Heart left ventricle (tissue), 16 donors: ENCODE measurements at regions of chr11 and their contacts with region 1.

Region 1: GRCh38 chr11:19566583-19567379 is 145.9 kb upstream of the NAV2 start:
- DNase-seq: no peak
- ATAC-seq: no peak
- H3K4me3 ChIP-seq: no peak overlapping the region
- H3K27ac ChIP-seq: peak overlapping the region in 1 of 12 donors; percentile 60
- H3K4me1 ChIP-seq: peaks cover 0 to 16% (median 5%) of the 10 kb centered on the region in 12 donors
- H3K27me3 ChIP-seq: peaks cover 0 to 4% (median 0%) of the 10 kb centered on the region in 9 donors
- CTCF ChIP-seq: no peak
- POLR2A ChIP-seq: no peak

Region 2: DNA sequence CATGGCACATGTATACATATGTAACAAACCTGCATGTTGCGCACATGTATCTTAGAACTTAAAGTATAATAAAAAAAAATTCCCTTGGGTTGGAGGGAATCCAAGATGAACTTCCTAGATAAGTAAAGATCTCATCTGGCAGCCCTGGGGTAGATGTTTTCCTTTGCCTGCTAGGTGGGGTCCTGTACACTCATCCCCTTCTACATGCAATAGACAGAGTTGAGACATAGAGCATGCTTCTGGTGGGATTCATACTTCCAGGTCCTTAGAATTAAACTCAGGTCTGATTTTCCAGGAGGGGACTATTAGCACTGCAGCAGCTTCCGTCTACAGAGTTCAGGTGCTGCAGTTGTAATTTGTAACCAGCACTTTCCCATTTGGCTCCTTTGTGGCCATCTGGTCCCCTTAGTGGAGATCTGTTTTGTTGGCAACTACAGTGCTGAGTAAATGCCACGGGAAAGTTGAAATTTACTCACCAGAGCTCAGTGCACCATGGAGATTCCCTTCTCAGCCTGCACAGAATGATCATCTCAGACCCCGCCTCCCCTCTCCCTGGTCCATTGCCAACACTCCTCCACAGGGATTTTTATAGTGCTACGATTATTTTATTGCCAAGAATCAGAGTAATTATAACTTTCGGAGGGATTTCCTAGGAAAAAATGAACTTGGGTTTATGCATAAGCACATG is 105.9 kb before region 1 on chr11:
- intact Hi-C with region 1: no loop called
- DNase-seq: peak in 4 of 5 donors; percentile 33 to 46 (median 40)
- ATAC-seq: peak in 3 of 4 donors; percentile 19 to 52 (median 26)
- H3K4me3 ChIP-seq: no peak overlapping the region
- H3K27ac ChIP-seq: no peak overlapping the region
- H3K4me1 ChIP-seq: peaks cover 0 to 11% (median 2%) of the 10 kb centered on the region in 12 donors
- H3K27me3 ChIP-seq: no peaks in the 10 kb centered on the region
- CTCF ChIP-seq: no peak
- POLR2A ChIP-seq: no peak

Region 3: GRCh38 chr11:19628018-19628417 is 61.2 kb after region 1 on chr11:
- intact Hi-C with region 1: loop called in 1 of 10 experiments (anchors 5 kb)
- DNase-seq: peak; percentile 43 to 85 (median 64)
- ATAC-seq: peak; percentile 94 to 97 (median 96)
- H3K4me3 ChIP-seq: no peak overlapping the region
- H3K27ac ChIP-seq: peak overlapping the region; percentile 7 to 84 (median 57)
- H3K4me1 ChIP-seq: peaks cover 0 to 36% (median 23%) of the 10 kb centered on the region in 12 donors
- H3K27me3 ChIP-seq: no peaks in the 10 kb centered on the region
- CTCF ChIP-seq: no peak
- POLR2A ChIP-seq: no peak

Region 4: GRCh38 chr11:19808076-19808911 is 241.5 kb after region 1 on chr11:
- intact Hi-C with region 1: loop called in 9 of 10 experiments (anchors 2 to 10 kb)
- DNase-seq: no peak
- ATAC-seq: no peak
- H3K4me3 ChIP-seq: no peak overlapping the region
- H3K27ac ChIP-seq: no peak overlapping the region
- H3K4me1 ChIP-seq: peaks cover 0 to 65% (median 24%) of the 10 kb centered on the region in 12 donors
- H3K27me3 ChIP-seq: no peaks in the 10 kb centered on the region
- CTCF ChIP-seq: peak in 8 of 12 donors; percentile 8 to 55 (median 38)
- POLR2A ChIP-seq: no peak

Region 5: DNA sequence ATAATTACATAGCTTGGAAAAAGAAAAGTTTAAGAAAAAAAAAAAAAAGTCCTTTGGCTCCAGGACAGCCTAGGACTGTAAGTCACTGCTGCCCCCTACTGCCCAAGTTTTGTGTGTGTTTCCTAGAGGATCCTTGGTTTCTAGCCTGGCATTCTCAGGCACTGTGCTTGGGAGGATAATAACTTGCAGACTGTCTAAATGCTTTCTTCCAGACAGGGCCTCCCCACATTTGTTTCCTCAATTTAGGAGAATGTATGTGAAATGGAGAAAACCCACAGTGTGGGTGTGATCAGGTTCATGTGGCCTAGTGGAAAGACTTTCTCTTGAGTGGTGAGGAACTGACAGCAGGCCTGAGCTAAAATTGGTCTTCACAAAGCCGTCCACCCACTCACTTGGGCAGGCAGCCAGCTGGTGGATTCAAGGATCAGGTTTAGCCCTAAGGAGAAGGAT is 336.9 kb after region 1 on chr11:
- intact Hi-C with region 1: loop called in 8 of 10 experiments (anchors 1 to 2 kb)
- DNase-seq: peak in 4 of 5 donors; percentile 46 to 75 (median 68)
- ATAC-seq: peak; percentile 44 to 73 (median 63)
- H3K4me3 ChIP-seq: no peak overlapping the region
- H3K27ac ChIP-seq: peak overlapping the region in 1 of 12 donors; percentile 10
- H3K4me1 ChIP-seq: peaks cover 0 to 26% (median 5%) of the 10 kb centered on the region in 12 donors
- H3K27me3 ChIP-seq: no peaks in the 10 kb centered on the region
- CTCF ChIP-seq: peak; percentile 68 to 85 (median 76)
- POLR2A ChIP-seq: no peak